BJ (cell line): ENCODE measurements at regions of chr16 and their contacts with region 1.

Region 1: DNA sequence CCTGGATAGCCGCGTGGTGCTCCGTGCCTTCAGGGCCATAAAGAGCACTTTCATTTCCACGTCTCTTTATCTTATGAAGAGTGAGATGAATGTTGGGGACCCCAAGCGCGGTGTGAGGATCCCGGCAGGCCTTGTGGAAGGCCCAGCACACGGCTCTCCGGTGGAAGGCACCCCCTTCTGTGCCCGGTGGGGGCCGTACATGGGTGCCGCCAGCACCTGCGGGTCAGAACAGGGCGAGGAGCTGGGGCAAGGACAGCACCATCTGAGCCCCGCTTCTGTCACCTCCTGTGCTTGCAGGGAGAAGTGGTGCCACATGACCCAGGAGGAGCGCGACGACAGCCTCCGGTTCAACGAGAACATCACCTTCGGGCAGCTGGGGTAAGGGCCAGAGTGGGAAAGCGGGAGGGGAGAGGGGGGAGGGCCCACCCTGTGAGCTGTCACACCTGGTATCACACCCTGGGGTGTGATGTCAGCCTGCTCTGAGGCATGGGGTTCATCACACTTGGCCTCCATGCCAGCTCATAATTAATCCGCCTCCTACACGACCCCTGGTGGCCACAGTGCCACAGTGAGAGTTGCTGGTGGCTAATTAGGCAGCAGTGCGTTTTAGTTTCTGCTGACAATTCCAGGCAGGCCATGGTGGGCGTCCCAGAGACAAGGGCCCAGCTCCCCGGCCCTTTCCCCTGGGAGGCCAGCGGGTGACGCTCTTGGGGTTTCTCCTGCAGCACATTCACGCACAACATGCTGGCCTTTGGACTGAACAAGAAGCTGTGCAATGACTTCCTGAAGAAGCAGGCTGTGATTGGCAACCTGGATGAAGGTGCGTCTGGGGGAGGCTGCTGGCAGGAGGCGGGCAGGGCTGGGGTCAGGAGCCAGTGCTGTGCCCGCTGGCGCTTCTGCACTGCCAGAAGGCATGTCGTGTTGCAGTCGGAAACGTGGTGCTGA is 25.7 kb downstream of the CIBAR2 start:
- DNase-seq: no peak
- H3K4me3 ChIP-seq: no peak overlapping the region
- H3K27me3 ChIP-seq: no peaks in the 10 kb centered on the region
- CTCF ChIP-seq: peak; percentile 68

Region 2: DNA sequence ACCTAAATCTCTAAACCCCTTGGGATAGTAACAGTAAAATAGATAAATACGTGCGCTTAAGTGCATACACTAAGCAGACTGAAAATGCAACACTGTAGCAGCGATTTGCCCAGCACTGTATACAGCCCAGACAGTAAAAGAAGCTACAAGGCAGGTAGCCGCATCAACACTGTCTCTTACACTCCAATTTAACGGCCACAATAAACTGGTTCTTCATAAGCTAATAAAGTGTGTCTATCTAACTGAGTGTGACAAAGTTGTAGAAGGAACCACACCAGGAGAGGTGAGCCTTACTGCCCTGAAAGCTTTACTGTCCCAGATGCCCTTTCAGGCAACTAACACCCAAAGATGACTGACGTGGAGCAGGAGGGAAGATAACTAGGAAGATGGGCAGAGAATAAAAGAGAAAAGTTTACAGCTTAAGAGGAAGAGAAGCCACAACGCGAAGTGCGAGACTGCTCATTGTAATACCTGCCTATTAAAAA is 76.1 kb before region 1 on chr16:
- CTCF ChIA-PET with region 1: no interaction called
- POLR2A ChIA-PET with region 1: no interaction called
- DNase-seq: no peak
- H3K4me3 ChIP-seq: peak overlapping the region; percentile 94
- H3K27me3 ChIP-seq: no peaks in the 10 kb centered on the region
- CTCF ChIP-seq: no peak

Region 3: GRCh38 chr16:85104821-85105391 is 18.3 kb after region 1 on chr16:
- CTCF ChIA-PET with region 1: interaction called, 14 read pairs
- POLR2A ChIA-PET with region 1: no interaction called
- DNase-seq: no peak
- H3K4me3 ChIP-seq: no peak overlapping the region
- H3K27me3 ChIP-seq: peaks cover 7% of the 10 kb centered on the region
- CTCF ChIP-seq: no peak